ENCODE measurements at regions of chr15 and their contacts with region 1.

Region 1: GRCh38 chr15:40470423-40471104 is at the start of gene CHST14:
- DNase-seq: peak; percentile 57 to 82 (median 75)
- ATAC-seq: peak; percentile 66 to 92 (median 86)
- H3K4me3 ChIP-seq: peak within 1 kb of the TSS; percentile 71 to 95 (median 90)
- H3K27ac ChIP-seq: peak within 1 kb of the TSS; percentile 74 to 94 (median 89)
- H3K4me1 ChIP-seq: peaks cover 0 to 26% (median 14%) of the 10 kb centered on the region in 12 donors
- H3K27me3 ChIP-seq: no peaks in the 10 kb centered on the region
- CTCF ChIP-seq: no peak
- POLR2A ChIP-seq: peak in 1 of 2 donors; percentile 26
- total RNA-seq, gene CHST14: 6.4 to 10.8 (median 8.6) TPM

Region 2: GRCh38 chr15:40407330-40407990 is 63.1 kb before region 1 on chr15:
- intact Hi-C with region 1: no loop called
- DNase-seq: no peak
- ATAC-seq: no peak
- H3K4me3 ChIP-seq: no peak overlapping the region
- H3K27ac ChIP-seq: no peak overlapping the region
- H3K4me1 ChIP-seq: peaks cover 0 to 31% (median 17%) of the 10 kb centered on the region in 12 donors
- H3K27me3 ChIP-seq: no peaks in the 10 kb centered on the region
- CTCF ChIP-seq: no peak
- POLR2A ChIP-seq: no peak

Region 3: DNA sequence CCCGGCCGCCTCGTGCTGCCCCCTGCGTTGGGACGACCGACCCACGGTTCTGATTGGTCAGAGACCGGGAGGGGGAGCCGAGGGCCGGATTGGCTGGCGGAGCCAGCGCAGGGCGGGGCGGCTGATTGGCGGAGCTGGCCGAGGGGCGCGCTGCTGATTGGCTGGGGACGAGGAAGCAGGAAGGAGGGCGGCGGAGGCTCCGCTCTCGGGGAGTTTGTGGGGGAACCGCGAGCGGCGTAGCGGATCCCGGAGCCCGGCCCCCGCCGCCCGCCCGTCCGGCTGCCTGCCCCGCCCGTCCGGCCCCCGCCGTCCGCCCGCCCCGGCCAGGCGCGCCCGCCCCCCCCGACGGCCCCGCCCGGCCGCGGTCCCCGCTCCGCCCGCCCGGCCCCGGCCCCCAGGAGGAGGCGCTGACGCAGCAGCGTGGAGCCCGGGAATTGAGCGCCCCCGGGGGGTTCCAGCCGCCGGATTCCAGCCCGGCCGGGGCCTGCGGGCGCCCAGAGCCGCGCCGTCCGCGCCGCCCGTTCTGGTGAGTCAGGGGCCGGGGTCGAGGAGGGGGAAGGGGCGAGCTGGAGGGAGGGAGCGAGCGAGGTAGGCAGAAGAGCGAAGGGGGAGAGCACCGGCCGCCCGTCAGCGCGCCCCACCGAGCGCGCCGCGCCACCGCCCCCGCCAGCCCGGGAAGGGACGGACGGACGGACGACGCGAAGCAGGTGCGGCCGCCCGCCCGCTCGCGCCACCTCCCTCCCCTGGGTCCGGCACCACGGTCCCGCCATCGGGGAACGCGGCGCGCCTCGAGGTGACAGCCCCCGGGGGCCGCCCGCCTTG is 29.6 kb before region 1 on chr15 and contains the start of gene BAHD1:
- intact Hi-C with region 1: loop called in 1 of 10 experiments (anchors 1 kb)
- DNase-seq: peak; percentile 98 to 99 (median 99)
- ATAC-seq: peak; percentile 91 to 95 (median 92)
- H3K4me3 ChIP-seq: peak within 1 kb of the TSS; percentile 75 to 100 (median 93)
- H3K27ac ChIP-seq: peak within 1 kb of the TSS in 11 of 12 donors; percentile 70 to 86 (median 80)
- H3K4me1 ChIP-seq: peaks cover 7 to 85% (median 53%) of the 10 kb centered on the region in 12 donors
- H3K27me3 ChIP-seq: peaks cover 0 to 27% (median 13%) of the 10 kb centered on the region in 9 donors
- CTCF ChIP-seq: peak in 5 of 12 donors; percentile 3 to 50 (median 7)
- POLR2A ChIP-seq: peak in 1 of 2 donors; percentile 49
- total RNA-seq, gene BAHD1: 12.8 to 28.4 (median 16.1) TPM

Region 4: DNA sequence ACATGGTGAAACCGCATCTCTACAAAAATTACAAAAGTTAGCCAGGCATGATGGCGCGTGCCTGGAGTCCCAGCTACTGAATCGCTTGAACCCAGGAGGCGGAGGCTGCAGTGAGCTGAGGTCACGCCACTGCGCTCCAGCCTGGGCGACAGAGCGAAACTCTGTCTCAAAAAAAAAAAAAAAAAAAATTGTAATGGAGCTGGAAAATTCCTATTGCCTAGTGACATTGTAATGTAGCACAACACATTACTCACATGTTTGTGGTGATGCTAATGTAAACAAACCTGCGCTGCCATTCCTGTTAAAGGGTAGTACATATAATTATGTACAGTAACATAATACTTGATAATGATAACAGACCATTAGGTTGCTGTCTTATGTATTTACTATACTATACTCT is 162.6 kb after region 1 on chr15:
- intact Hi-C with region 1: no loop called
- DNase-seq: no peak
- ATAC-seq: no peak
- H3K4me3 ChIP-seq: no peak overlapping the region
- H3K27ac ChIP-seq: no peak overlapping the region
- H3K4me1 ChIP-seq: no peaks in the 10 kb centered on the region
- H3K27me3 ChIP-seq: no peaks in the 10 kb centered on the region
- CTCF ChIP-seq: no peak
- POLR2A ChIP-seq: no peak

Region 5: GRCh38 chr15:41104234-41104633 is 633.7 kb after region 1 on chr15:
- intact Hi-C with region 1: loop called in 1 of 10 experiments (anchors 10 kb)
- DNase-seq: no peak
- ATAC-seq: no peak
- H3K4me3 ChIP-seq: no peak overlapping the region
- H3K27ac ChIP-seq: no peak overlapping the region
- H3K4me1 ChIP-seq: peaks cover 0 to 10% (median 2%) of the 10 kb centered on the region in 12 donors
- H3K27me3 ChIP-seq: no peaks in the 10 kb centered on the region
- CTCF ChIP-seq: no peak
- POLR2A ChIP-seq: no peak

Measured in heart left ventricle (tissue), 16 donors.